ENCODE measurements at regions of chr2 and their contacts with region 1.

Region 1: GRCh38 chr2:10302479-10303180 is at the start of gene HPCAL1:
- DNase-seq: peak; percentile 78 to 98 (median 91)
- ATAC-seq: peak; percentile 88
- H3K4me3 ChIP-seq: peak within 1 kb of the TSS; percentile 82 to 89
- H3K27ac ChIP-seq: peak within 1 kb of the TSS; percentile 75 to 93
- H3K4me1 ChIP-seq: peaks cover 30 to 83% of the 10 kb centered on the region in 2 donors
- H3K27me3 ChIP-seq: peaks cover 0 to 5% of the 10 kb centered on the region in 2 donors
- CTCF ChIP-seq: peak; percentile 60 to 75
- polyA plus RNA-seq, gene HPCAL1: 58.1 to 84.3 (median 69.7) TPM

Region 2: GRCh38 chr2:10360851-10361588 is 58.4 kb after region 1 on chr2:
- intact Hi-C with region 1: no loop called
- DNase-seq: peak in 1 of 4 donors; percentile 49
- ATAC-seq: no peak
- H3K4me3 ChIP-seq: no peak overlapping the region
- H3K27ac ChIP-seq: no peak overlapping the region
- H3K4me1 ChIP-seq: peaks cover 0 to 40% of the 10 kb centered on the region in 2 donors
- H3K27me3 ChIP-seq: no peaks in the 10 kb centered on the region
- CTCF ChIP-seq: no peak

Region 3: GRCh38 chr2:10408649-10409579 is 106.3 kb after region 1 on chr2:
- intact Hi-C with region 1: loop called in 1 of 2 experiments (anchors 10 kb)
- DNase-seq: peak; percentile 59 to 94 (median 87)
- ATAC-seq: peak; percentile 88
- H3K4me3 ChIP-seq: no peak overlapping the region
- H3K27ac ChIP-seq: peak overlapping the region; percentile 63 to 81
- H3K4me1 ChIP-seq: peaks cover 30 to 76% of the 10 kb centered on the region in 2 donors
- H3K27me3 ChIP-seq: no peaks in the 10 kb centered on the region
- CTCF ChIP-seq: peak; percentile 97

Region 4: DNA sequence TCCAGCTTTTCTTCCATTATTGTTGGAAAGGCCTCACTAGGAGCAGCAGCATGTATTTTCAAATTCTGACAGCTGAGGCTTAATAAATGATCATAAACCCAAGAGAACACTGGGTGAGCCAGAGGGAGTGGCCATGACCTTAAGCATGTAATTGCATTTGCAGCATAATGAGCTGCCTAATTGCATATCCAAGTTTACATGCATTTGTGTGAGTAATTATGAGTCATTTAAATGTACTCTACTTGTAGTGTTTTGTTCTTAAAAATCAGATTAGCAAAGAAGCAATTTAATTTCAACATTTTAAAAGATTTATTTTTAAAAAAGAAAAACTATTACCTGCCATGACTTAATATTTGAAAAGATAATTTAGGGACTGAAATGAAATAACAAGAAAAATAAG is 312.3 kb after region 1 on chr2:
- intact Hi-C with region 1: no loop called
- DNase-seq: no peak
- ATAC-seq: no peak
- H3K4me3 ChIP-seq: no peak overlapping the region
- H3K27ac ChIP-seq: no peak overlapping the region
- H3K4me1 ChIP-seq: no peaks in the 10 kb centered on the region
- H3K27me3 ChIP-seq: no peaks in the 10 kb centered on the region
- CTCF ChIP-seq: no peak